Calu3 (cell line): ENCODE measurements at regions of chr5 and their contacts with region 1.

Region 1: GRCh38 chr5:57499262-57500050 is 16.8 kb upstream of the ACTBL2 start:
- DNase-seq: peak; percentile 52
- H3K4me3 Mint-ChIP-seq: no peak overlapping the region
- H3K27ac Mint-ChIP-seq: peak overlapping the region; percentile 56
- H3K4me1 Mint-ChIP-seq: peaks cover 81% of the 10 kb centered on the region
- H3K27me3 Mint-ChIP-seq: no peaks in the 10 kb centered on the region
- CTCF ChIP-seq: peak; percentile 63

Region 2: GRCh38 chr5:57338068-57338892 is 161.2 kb before region 1 on chr5:
- CTCF ChIA-PET with region 1: interaction called, 3 read pairs
- intact Hi-C with region 1: loop called (anchors 10 kb)
- DNase-seq: peak; percentile 50
- H3K4me3 Mint-ChIP-seq: no peak overlapping the region
- H3K27ac Mint-ChIP-seq: peak overlapping the region; percentile 33
- H3K4me1 Mint-ChIP-seq: peaks cover 12% of the 10 kb centered on the region
- H3K27me3 Mint-ChIP-seq: no peaks in the 10 kb centered on the region
- CTCF ChIP-seq: peak; percentile 72

Region 3: DNA sequence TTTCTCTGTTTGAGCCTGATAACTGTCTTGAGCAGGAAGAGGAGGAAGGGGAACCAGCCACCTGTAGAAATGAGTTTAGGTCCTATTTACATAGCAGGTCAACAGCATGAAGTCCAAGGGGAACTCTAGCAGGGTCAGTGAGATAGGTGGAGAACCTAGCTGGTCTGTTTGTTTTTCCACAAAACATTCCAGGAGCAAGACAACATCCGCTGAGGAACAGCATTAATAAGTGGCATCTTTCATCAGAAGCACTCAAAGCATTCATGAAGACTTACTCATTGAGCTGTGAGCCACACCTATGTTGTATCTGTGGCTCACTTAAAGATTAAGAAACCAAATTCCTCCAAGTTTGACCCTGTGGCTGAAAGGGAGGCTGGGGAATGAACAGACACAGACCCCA is 132.7 kb before region 1 on chr5:
- CTCF ChIA-PET with region 1: interaction called, 3 read pairs
- intact Hi-C with region 1: loop called (anchors 5 kb)
- DNase-seq: peak; percentile 51
- H3K4me3 Mint-ChIP-seq: no peak overlapping the region
- H3K27ac Mint-ChIP-seq: no peak overlapping the region
- H3K4me1 Mint-ChIP-seq: peaks cover 22% of the 10 kb centered on the region
- H3K27me3 Mint-ChIP-seq: no peaks in the 10 kb centered on the region
- CTCF ChIP-seq: no peak

Region 4: DNA sequence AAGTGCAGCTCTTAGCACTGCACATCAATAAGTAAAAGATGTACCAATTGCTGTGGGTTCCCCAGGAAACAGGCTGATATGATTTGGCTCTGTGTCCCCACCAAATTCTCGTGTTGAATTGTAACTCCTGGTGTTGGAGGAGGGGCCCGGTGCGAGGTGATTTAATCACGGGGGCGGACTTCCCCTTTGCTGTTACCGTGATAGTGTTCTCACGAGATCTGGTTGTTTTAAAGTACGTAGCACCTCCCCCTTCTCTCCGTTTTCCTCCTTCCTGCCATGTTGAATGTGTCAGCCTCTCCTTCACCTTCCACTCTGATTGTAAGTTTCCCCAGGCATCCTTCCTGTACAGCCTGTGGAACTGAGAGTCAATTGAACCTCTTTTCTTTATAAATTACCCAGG is 76.4 kb after region 1 on chr5:
- CTCF ChIA-PET with region 1: no interaction called
- intact Hi-C with region 1: no loop called
- DNase-seq: no peak
- H3K4me3 Mint-ChIP-seq: no peak overlapping the region
- H3K27ac Mint-ChIP-seq: no peak overlapping the region
- H3K4me1 Mint-ChIP-seq: no peaks in the 10 kb centered on the region
- H3K27me3 Mint-ChIP-seq: no peaks in the 10 kb centered on the region
- CTCF ChIP-seq: no peak

Region 5: GRCh38 chr5:57692582-57693487 is 193.4 kb after region 1 on chr5:
- CTCF ChIA-PET with region 1: no interaction called
- intact Hi-C with region 1: loop called (anchors 10 kb)
- DNase-seq: peak; percentile 86
- H3K4me3 Mint-ChIP-seq: peak overlapping the region; percentile 71
- H3K27ac Mint-ChIP-seq: peak overlapping the region; percentile 98
- H3K4me1 Mint-ChIP-seq: peaks cover 51% of the 10 kb centered on the region
- H3K27me3 Mint-ChIP-seq: no peaks in the 10 kb centered on the region
- CTCF ChIP-seq: no peak

Region 6: DNA sequence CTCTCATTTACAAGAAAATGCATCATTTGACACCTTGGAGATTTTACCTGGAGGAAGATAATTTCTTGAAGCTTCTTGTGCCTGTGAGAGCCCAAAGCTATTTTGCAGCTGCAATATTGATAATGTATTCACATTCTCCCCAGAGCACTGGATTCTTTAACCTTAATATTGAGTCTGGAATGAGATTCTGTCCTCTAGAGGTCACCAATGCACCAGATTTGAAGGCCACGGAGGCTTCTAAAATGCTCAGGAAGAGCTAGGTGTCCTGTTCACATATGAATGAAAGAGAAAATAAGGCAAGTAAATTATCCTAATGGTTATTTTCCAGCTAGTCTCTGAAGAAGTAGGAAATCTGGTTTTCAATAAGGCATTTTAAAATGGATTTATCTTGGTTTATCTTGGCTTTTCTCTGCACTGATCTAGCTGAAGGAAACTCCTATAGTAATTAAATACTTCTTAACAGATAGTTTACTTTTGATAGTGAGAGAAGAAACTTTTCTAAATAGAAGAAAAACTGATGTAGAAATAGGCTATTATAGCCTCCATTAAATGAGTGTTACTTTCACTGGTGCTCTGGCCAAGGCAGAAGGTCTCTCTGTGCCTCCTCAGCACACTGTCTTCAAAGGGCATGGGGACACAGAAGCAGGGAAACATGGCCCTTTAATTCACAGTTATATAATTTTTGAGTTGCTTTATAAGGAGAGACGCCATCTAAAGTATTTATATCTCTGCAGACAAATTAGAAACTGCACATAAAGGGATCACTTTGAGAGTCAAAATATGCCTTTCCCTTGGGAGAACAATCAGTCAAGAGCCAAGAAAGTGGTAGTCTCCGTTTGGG is 280.1 kb after region 1 on chr5:
- CTCF ChIA-PET with region 1: interaction called, 33 read pairs
- intact Hi-C with region 1: loop called (anchors 2 kb)
- DNase-seq: peak; percentile 60
- H3K4me3 Mint-ChIP-seq: no peak overlapping the region
- H3K27ac Mint-ChIP-seq: peak overlapping the region; percentile 22
- H3K4me1 Mint-ChIP-seq: peaks cover 59% of the 10 kb centered on the region
- H3K27me3 Mint-ChIP-seq: no peaks in the 10 kb centered on the region
- CTCF ChIP-seq: peak; percentile 44

Region 7: GRCh38 chr5:57887851-57888621 is 388.6 kb after region 1 on chr5:
- CTCF ChIA-PET with region 1: interaction called, 7 read pairs
- intact Hi-C with region 1: loop called (anchors 5 kb)
- DNase-seq: peak; percentile 53
- H3K4me3 Mint-ChIP-seq: no peak overlapping the region
- H3K27ac Mint-ChIP-seq: no peak overlapping the region
- H3K4me1 Mint-ChIP-seq: peaks cover 17% of the 10 kb centered on the region
- H3K27me3 Mint-ChIP-seq: no peaks in the 10 kb centered on the region
- CTCF ChIP-seq: no peak